WTC11 (cell line): ENCODE measurements at regions of chr16 and their contacts with region 1.

Region 1: DNA sequence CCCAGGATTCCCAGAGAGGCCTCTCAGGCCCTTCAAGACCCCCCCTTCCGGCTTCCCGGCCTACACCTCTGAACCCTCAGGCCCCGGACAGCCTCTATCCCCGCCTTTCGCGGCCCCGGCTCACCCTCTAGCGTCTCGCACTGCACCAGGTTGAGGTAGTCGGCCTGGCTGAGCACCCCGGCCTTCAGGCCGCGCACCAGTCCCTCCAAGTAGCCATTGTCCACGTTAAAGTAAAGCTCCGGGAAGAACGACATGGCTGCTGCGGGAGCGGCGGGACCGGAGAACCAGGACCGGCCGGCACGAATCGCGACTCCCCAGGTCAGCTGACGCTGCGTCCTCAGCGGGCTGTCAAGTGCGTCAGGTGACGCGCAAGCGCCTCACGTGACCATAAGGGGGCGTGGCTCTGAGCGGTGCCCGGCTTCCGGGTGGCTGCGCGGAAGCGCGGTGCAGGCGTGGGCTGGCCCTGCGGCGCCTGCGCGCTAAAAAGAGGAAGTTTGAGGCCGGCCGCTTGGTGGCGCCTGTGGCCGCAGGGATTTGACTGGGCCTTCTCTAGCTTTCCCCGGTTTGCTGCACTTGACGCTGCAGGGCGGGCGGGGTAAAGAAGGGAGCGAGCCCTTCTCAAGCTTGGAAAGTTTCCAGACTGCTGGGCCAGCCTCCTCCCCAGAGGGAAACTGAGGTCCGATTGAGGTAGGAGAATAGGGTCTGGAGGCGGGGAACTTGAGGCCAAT is at the start of gene ATP6V0D1:
- DNase-seq: peak; percentile 99
- ATAC-seq: peak; percentile 95
- H3K4me3 Mint-ChIP-seq: peak within 1 kb of the TSS; percentile 98
- H3K27ac Mint-ChIP-seq: peak within 1 kb of the TSS; percentile 97
- H3K4me1 Mint-ChIP-seq: peaks cover 5% of the 10 kb centered on the region
- H3K27me3 Mint-ChIP-seq: peaks cover 36% of the 10 kb centered on the region
- CTCF ChIP-seq: peak; percentile 49; the same call in 1 of the 2 replicates
- total RNA-seq, gene ATP6V0D1: 32.5 to 44.1 TPM (median 33.8 TPM) in 3 replicates

Region 2: DNA sequence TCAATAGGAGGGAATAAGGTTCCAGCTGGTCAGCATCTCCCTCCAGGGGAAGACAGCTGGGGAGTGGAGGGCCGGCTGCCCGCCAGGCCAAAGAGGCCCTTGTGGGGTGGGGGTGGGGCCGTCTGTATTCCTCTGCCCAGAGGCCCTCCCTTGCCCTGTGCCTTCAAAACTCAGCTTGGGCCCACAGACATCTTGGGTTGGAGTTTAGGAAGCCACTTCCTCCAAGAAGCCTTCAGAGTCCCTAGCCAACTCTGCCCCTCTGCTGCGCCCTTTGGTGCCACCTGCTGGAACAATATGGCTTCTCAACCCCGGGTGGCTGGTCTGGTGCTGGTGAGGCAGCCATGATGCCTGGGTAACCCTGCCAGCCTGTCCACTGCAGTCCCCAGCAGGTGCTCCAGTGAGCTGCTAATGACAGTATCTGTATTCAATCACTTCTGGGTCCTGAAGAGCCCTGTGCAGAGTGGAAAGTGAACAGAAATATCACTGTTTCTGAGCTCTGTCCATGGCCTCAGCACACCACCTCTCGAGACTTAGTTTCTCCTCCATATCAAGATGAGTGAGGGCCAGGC is 33.4 kb before region 1 on chr16:
- CTCF ChIA-PET with region 1: interaction called, 14 read pairs
- POLR2A ChIA-PET with region 1: no interaction called
- DNase-seq: peak; percentile 62
- ATAC-seq: no peak; the same call in 1 of the 2 replicates
- H3K4me3 Mint-ChIP-seq: no peak overlapping the region
- H3K27ac Mint-ChIP-seq: no peak overlapping the region
- H3K4me1 Mint-ChIP-seq: peaks cover 6% of the 10 kb centered on the region
- H3K27me3 Mint-ChIP-seq: no peaks in the 10 kb centered on the region; the same call in 1 of the 2 replicates
- CTCF ChIP-seq: 0 out of 2 replicates have a peak, but pooled peaks have one; percentile 16

Region 3: GRCh38 chr16:67470359-67470758 is 10.6 kb before region 1 on chr16:
- CTCF ChIA-PET with region 1: interaction called, 27 read pairs
- POLR2A ChIA-PET with region 1: no interaction called
- DNase-seq: no peak
- ATAC-seq: no peak
- H3K4me3 Mint-ChIP-seq: no peak overlapping the region
- H3K27ac Mint-ChIP-seq: no peak overlapping the region
- H3K4me1 Mint-ChIP-seq: peaks cover 3% of the 10 kb centered on the region
- H3K27me3 Mint-ChIP-seq: no peaks in the 10 kb centered on the region; the same call in 1 of the 2 replicates
- CTCF ChIP-seq: no peak

Region 4: GRCh38 chr16:67514382-67514828 is 33.4 kb after region 1 on chr16:
- CTCF ChIA-PET with region 1: interaction called, 70 read pairs
- POLR2A ChIA-PET with region 1: interaction called, 3 read pairs
- DNase-seq: peak; percentile 71
- ATAC-seq: peak; percentile 64
- H3K4me3 Mint-ChIP-seq: no peak overlapping the region
- H3K27ac Mint-ChIP-seq: no peak overlapping the region
- H3K4me1 Mint-ChIP-seq: no peaks in the 10 kb centered on the region
- H3K27me3 Mint-ChIP-seq: peaks cover 34% of the 10 kb centered on the region
- CTCF ChIP-seq: peak; percentile 59

Region 5: GRCh38 chr16:67530013-67530939 is 49.3 kb after region 1 on chr16:
- CTCF ChIA-PET with region 1: interaction called, 20 read pairs
- POLR2A ChIA-PET with region 1: no interaction called
- DNase-seq: peak; percentile 53
- ATAC-seq: peak; percentile 4
- H3K4me3 Mint-ChIP-seq: peak overlapping the region; percentile 77
- H3K27ac Mint-ChIP-seq: no peak overlapping the region
- H3K4me1 Mint-ChIP-seq: peaks cover 5% of the 10 kb centered on the region
- H3K27me3 Mint-ChIP-seq: peaks cover 94% of the 10 kb centered on the region
- CTCF ChIP-seq: no peak

Region 6: GRCh38 chr16:67537270-67537635 is 56.3 kb after region 1 on chr16:
- CTCF ChIA-PET with region 1: interaction called, 11 read pairs
- POLR2A ChIA-PET with region 1: no interaction called
- DNase-seq: peak; percentile 62
- ATAC-seq: peak; percentile 56
- H3K4me3 Mint-ChIP-seq: peak overlapping the region; percentile 76
- H3K27ac Mint-ChIP-seq: no peak overlapping the region
- H3K4me1 Mint-ChIP-seq: peaks cover 14% of the 10 kb centered on the region
- H3K27me3 Mint-ChIP-seq: peaks cover 96% of the 10 kb centered on the region
- CTCF ChIP-seq: no peak

Region 7: DNA sequence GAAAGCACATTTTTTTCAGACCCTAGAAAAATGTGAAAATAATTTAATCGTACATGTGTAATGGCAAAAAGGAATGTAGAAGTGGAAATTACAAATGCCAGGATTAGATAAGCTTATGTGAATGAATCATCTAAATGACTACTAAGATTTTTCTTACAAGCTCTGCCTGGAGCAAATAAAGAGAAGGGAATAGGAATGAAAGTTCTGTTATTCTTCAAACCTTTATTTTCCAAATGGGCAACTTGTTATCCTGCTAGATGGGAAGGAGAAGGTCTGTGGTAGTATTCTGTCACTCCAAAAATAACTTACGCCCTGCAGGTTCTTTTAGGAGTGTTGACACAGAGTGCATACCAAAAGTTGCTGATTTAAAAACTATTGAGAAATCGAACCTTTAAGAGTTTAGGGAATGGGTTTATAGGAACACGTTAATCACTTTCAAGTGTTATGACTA is 91.0 kb after region 1 on chr16:
- CTCF ChIA-PET with region 1: no interaction called
- POLR2A ChIA-PET with region 1: no interaction called
- DNase-seq: no peak
- ATAC-seq: no peak
- H3K4me3 Mint-ChIP-seq: no peak overlapping the region
- H3K27ac Mint-ChIP-seq: no peak overlapping the region
- H3K4me1 Mint-ChIP-seq: peaks cover 3% of the 10 kb centered on the region; the same call in 1 of the 2 replicates
- H3K27me3 Mint-ChIP-seq: no peaks in the 10 kb centered on the region
- CTCF ChIP-seq: no peak